Ascending aorta (tissue), 2 donors: ENCODE measurements at regions of chr15 and their contacts with region 1.

Region 1: DNA sequence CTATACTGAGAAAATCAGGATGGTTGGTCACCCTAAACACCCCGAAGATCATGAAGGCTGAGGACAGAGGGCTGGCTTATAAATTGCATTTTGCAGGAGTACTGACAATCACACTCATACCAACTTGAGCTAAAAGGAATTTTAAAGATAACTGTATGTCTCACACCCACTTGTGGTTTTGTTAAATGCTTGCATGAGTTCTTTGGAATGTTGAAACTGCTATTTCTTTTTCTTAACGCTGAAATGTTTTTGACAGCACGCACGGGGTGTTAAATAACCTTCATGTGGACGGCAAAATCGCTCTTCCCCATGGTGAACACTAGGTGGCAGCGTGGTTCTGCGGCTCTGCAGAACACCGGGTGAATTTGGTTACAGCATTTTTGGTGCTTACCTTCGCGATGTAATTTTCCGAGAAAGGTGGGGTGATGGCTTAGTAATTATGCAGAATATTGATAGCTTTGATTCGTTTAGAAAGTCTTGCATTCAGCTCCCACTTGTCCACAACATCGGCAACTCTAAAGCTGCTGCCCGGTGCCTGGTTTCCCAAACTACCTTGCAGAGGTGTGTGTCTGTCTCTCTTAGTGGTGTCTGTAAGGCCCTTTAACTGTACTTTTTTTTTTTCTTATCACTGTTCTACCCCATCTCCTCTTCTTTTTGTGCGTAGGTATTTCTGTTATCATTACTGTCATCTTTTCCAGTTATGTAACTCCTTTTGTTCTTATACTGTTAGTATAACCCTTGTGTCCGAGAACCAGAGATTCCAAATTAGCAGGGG is 51.7 kb downstream of the ARNT2 start:
- DNase-seq: peak in 1 of 2 donors; percentile 73
- H3K4me3 ChIP-seq: no peak overlapping the region
- H3K27ac ChIP-seq: no peak overlapping the region
- H3K4me1 ChIP-seq: no peaks in the 10 kb centered on the region
- H3K27me3 ChIP-seq: no peaks in the 10 kb centered on the region
- CTCF ChIP-seq: peak; percentile 80 to 92 (median 89)

Region 2: GRCh38 chr15:80512726-80513660 is 57.1 kb after region 1 on chr15:
- intact Hi-C with region 1: loop called (anchors 1 kb)
- DNase-seq: no peak
- H3K4me3 ChIP-seq: no peak overlapping the region
- H3K27ac ChIP-seq: no peak overlapping the region
- H3K4me1 ChIP-seq: no peaks in the 10 kb centered on the region
- H3K27me3 ChIP-seq: no peaks in the 10 kb centered on the region
- CTCF ChIP-seq: peak in 1 of 3 experiments; percentile 25

Region 3: DNA sequence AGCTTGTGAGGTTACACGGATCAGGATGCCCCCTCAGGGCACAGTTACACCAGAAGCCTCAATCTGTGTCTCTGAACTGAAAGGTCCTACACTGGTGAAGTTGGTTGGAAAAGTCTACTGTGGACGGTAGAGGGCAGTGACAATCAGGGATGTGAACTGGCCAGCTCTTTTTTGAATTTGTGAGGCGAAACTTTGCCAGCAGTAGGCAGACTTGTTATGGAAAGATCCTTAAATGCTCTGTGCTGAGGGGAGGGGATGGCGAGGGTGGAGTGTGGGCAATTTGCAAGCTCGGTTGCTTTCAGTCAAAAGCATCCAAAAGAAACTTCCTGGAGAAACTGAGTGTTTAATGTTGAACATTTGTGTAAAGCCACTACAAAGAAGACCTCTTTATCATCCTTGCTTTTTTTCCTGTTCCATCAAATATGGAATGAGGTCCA is 111.9 kb after region 1 on chr15:
- intact Hi-C with region 1: loop called (anchors 1 kb)
- DNase-seq: peak in 1 of 2 donors; percentile 73
- H3K4me3 ChIP-seq: no peak overlapping the region
- H3K27ac ChIP-seq: no peak overlapping the region
- H3K4me1 ChIP-seq: no peaks in the 10 kb centered on the region
- H3K27me3 ChIP-seq: no peaks in the 10 kb centered on the region
- CTCF ChIP-seq: peak; percentile 53 to 70 (median 58)

Region 4: GRCh38 chr15:80695104-80695910 is 239.5 kb after region 1 on chr15 and contains the start of gene ABHD17C:
- intact Hi-C with region 1: loop called (anchors 2 kb)
- DNase-seq: peak in 1 of 2 donors; percentile 69
- H3K4me3 ChIP-seq: peak within 1 kb of the TSS; percentile 80 to 85
- H3K27ac ChIP-seq: peak within 1 kb of the TSS; percentile 81 to 82
- H3K4me1 ChIP-seq: peaks cover 0 to 10% of the 10 kb centered on the region in 2 donors
- H3K27me3 ChIP-seq: no peaks in the 10 kb centered on the region
- CTCF ChIP-seq: no peak
- total RNA-seq, gene ABHD17C: 0.96 TPM

Region 5: DNA sequence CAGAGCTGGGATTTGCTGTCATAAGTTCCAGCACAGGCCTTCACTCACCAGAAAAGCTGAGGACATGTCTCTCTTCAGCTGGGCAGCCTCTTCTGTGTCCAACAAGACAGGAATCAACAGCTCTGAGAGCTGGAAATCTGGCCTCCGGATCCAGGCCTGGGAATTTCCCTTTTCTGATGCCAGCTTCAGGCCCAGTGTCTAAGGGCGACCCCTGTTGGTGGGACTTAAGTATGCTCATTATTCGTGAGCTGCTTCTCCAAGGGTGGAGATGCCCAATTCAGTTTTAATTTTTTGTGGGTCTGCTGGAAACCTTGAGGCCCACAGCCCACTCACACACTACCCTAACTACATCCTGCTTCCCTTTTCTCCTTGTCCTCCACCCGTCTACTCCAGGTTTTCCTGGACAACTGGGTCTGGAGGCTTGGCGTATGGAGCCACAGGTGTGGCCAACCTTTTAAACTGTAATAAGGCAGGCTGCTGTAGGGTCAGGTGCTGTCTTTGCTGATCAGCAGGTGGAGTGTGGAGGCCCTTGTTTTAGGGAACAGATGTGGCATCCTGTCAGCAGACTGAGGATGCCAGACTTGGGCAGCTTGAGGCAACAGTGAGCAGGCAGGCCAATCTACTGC is 320.7 kb after region 1 on chr15:
- intact Hi-C with region 1: loop called (anchors 1 kb)
- DNase-seq: peak in 1 of 2 donors; percentile 77
- H3K4me3 ChIP-seq: no peak overlapping the region
- H3K27ac ChIP-seq: no peak overlapping the region
- H3K4me1 ChIP-seq: peaks cover 14 to 21% of the 10 kb centered on the region in 2 donors
- H3K27me3 ChIP-seq: no peaks in the 10 kb centered on the region
- CTCF ChIP-seq: peak; percentile 59 to 78 (median 72)

Region 6: DNA sequence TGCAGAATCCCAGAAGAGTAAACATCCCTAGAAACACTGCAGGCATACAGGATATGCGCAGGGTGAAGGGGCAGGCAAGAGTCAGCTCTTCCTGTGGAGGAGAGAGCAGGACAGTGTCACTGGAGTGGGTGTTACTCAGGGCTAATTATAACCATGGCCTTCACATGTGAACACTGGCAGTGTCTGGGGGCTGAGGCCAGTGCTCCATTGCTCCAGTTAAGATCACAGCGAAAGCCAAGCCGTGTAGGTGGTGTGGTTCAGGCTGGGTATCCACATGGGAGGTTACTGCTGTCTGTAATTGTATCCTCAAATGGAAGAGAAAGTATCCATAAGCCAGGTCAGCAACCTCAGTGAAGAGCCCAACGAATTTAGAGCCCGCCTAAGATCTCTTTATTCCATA is 449.1 kb after region 1 on chr15:
- intact Hi-C with region 1: no loop called
- DNase-seq: no peak
- H3K4me3 ChIP-seq: no peak overlapping the region
- H3K27ac ChIP-seq: no peak overlapping the region
- H3K4me1 ChIP-seq: no peaks in the 10 kb centered on the region
- H3K27me3 ChIP-seq: no peaks in the 10 kb centered on the region
- CTCF ChIP-seq: no peak

Region 7: GRCh38 chr15:80970018-80970658 is 514.3 kb after region 1 on chr15:
- intact Hi-C with region 1: loop called (anchors 5 kb)
- DNase-seq: peak in 1 of 2 donors; percentile 64
- H3K4me3 ChIP-seq: no peak overlapping the region
- H3K27ac ChIP-seq: no peak overlapping the region
- H3K4me1 ChIP-seq: no peaks in the 10 kb centered on the region
- H3K27me3 ChIP-seq: no peaks in the 10 kb centered on the region
- CTCF ChIP-seq: peak; percentile 79 to 87 (median 80)